K562 (cell line): ENCODE measurements at regions of chr1 and their contacts with region 1.

Region 1: DNA sequence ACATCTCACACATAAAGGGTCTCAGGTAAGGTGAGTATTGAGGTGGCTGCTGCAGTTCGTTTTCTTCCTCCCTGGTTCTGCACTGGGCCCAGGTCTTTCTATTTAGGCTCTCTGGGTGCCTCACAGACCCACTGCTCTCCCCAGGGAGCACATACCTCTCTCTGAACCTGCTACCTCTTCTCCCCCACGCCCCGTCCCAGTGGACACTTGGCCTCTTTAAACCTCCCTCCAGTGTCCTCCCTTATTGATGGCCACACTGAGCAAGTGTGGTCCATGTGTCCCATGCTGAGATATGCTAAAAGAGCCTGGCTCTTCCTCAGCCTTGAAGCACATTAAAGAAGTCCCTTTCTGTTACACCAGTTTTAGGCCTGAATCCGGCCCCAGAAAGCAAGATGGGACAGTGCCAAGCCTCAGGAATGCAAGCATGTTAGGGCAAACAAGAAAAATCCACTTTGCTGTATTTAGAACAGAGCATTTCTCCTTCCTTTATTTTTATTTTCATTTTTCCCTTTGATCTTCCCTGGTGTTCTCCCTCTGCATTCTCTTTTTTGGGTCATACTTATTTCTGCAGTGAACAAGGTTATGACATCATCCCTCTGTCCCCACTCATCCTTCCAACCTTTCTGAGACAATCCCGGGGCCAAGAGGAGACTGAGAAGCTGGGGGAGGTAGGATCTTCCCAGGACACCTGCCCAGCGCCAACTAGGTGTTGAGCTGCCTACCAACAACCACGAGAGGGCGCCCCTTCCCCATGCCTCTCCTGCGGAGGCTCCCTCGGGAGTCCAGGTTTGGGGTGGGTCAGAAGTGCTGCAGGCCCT is 5.0 kb upstream of the CHI3L2 start:
- DNase-seq: peak; percentile 86 to 92 (median 91)
- ATAC-seq: peak; percentile 99
- H3K4me3 ChIP-seq: no peak overlapping the region
- H3K27ac ChIP-seq: no peak overlapping the region
- H3K4me1 ChIP-seq: no peaks in the 10 kb centered on the region; a peak in 2 of 5 replicates
- H3K27me3 ChIP-seq: peaks cover 4 to 15% of the 10 kb centered on the region in 2 experiments; a peak in 2 of 5 replicates
- CTCF ChIP-seq: peak; percentile 95 to 97 (median 95)
- EP300 ChIP-seq: no peak
- POLR2A ChIP-seq: no peak
- RAD21 ChIP-seq: peak; percentile 94 to 98

Region 2: GRCh38 chr1:111030590-111030989 is 191.9 kb before region 1 on chr1:
- CTCF ChIA-PET with region 1: no interaction called
- POLR2A ChIA-PET with region 1: no interaction called
- in situ Hi-C with region 1: no loop called
- intact Hi-C with region 1: loop called (anchors 2 kb)
- DNase-seq: peak; percentile 44 to 83 (median 53)
- ATAC-seq: peak; percentile 95
- H3K4me3 ChIP-seq: no peak overlapping the region
- H3K27ac ChIP-seq: no peak overlapping the region
- H3K4me1 ChIP-seq: peaks cover 0 to under 1% of the 10 kb centered on the region in 2 experiments; a peak in 1 of 5 replicates
- H3K27me3 ChIP-seq: no peaks in the 10 kb centered on the region
- CTCF ChIP-seq: peak; percentile 86 to 93 (median 87)
- EP300 ChIP-seq: no peak
- POLR2A ChIP-seq: no peak
- RAD21 ChIP-seq: peak; percentile 59 to 89

Region 3: DNA sequence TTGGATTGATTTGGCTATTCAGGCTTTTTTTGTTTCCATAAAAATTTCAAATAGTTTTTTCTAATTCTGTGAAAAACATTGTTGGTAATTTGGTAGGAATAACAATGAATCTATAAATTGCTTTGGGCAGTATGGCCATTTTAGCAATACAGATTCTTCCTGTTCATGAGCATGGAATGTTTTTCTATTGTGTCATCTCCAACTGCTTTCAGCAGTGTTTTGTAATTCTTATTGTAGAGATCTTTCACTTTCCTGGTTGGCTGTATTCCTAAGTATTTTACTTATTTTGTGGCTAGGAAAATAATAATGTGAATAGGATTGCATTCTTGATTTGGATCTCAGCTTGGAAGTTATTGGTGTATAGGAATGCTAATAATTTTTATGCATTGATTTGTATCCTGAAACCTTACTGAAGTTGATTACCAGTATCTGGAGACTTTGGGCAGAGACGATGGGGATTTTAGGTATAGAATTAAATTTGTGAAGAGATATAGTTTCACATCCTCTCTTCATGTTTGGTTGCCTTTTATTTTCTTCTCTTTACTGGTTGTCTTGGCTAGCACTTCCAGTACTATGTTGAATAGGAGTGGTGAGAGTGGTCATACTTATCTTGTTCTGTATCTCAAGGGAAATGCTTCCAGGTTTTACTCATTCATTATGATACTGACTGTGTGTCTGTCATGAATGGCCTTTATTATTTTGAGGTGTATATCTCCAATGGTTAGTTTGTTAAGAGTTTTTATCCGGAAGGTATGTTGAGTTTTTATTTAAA is 139.9 kb before region 1 on chr1:
- CTCF ChIA-PET with region 1: no interaction called
- POLR2A ChIA-PET with region 1: no interaction called
- in situ Hi-C with region 1: no loop called
- intact Hi-C with region 1: no loop called
- DNase-seq: no peak
- ATAC-seq: no peak
- H3K4me3 ChIP-seq: no peak overlapping the region
- H3K27ac ChIP-seq: no peak overlapping the region
- H3K4me1 ChIP-seq: no peaks in the 10 kb centered on the region
- H3K27me3 ChIP-seq: no peaks in the 10 kb centered on the region
- CTCF ChIP-seq: no peak
- EP300 ChIP-seq: no peak
- POLR2A ChIP-seq: no peak
- RAD21 ChIP-seq: no peak

Region 4: GRCh38 chr1:111270781-111271463 is 48.4 kb after region 1 on chr1:
- CTCF ChIA-PET with region 1: no interaction called
- POLR2A ChIA-PET with region 1: no interaction called
- in situ Hi-C with region 1: no loop called
- intact Hi-C with region 1: no loop called
- DNase-seq: no peak
- ATAC-seq: peak; percentile 49; the same call in 2 of the 3 replicates
- H3K4me3 ChIP-seq: no peak overlapping the region
- H3K27ac ChIP-seq: no peak overlapping the region
- H3K4me1 ChIP-seq: peaks cover 0 to 9% of the 10 kb centered on the region in 2 experiments; a peak in 2 of 5 replicates
- H3K27me3 ChIP-seq: peaks cover 17 to 21% of the 10 kb centered on the region in 2 experiments
- CTCF ChIP-seq: no peak
- EP300 ChIP-seq: no peak
- POLR2A ChIP-seq: no peak
- RAD21 ChIP-seq: no peak

Region 5: DNA sequence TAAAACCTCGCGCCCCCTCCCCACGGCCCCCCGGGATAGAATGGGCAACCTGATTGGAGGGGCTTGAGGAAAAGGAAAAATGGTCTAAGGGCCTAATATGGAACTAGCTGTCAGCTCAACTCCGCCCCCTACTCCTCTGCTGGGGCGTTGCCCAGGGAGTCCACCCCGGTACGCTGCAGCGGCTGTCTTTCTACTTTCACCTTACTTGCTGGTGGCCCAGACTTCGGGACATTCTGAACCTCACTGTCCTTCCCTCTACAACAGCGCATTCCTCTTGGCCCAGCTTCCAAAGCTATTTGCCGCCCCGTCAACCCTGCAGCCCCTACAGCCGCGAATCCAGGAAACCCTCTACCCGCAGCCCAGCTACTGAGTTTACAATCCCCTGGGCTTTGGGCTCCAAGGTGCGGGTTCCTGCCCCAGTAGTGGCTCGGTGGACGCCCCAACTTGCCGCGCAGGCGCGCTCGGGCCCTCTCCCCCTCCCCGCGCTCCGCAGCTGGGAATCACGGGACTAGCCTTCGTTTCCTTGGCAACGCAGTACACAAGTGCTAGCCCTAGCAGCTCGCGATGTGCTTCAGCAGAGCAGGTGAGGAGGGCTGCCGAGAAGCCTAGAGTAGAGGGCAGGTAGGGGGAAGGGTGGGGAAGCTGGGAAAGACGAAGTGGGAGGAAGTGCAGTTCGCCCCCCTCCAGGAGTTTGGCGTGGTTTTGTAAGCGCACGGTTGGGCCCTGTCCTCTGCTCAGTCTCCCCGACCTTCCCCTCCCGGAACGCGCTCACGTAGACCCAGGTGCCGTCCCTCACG is 123.8 kb after region 1 on chr1:
- CTCF ChIA-PET with region 1: no interaction called
- POLR2A ChIA-PET with region 1: no interaction called
- in situ Hi-C with region 1: no loop called
- intact Hi-C with region 1: loop called (anchors 5 kb)
- DNase-seq: peak; percentile 86 to 94 (median 87)
- ATAC-seq: peak; percentile 99
- H3K4me3 ChIP-seq: peak overlapping the region; percentile 42
- H3K27ac ChIP-seq: no peak overlapping the region
- H3K4me1 ChIP-seq: peaks cover 0 to 7% of the 10 kb centered on the region in 2 experiments; a peak in 3 of 5 replicates
- H3K27me3 ChIP-seq: peaks cover 0 to 15% of the 10 kb centered on the region in 2 experiments; a peak in 1 of 5 replicates
- CTCF ChIP-seq: peak; percentile 24 to 43 (median 42); a peak in 4 of 6 replicates
- EP300 ChIP-seq: no peak
- POLR2A ChIP-seq: no peak
- RAD21 ChIP-seq: 0 out of 4 replicates have a peak, but pooled peaks of 1 of the 2 experiments have one; percentile 16

Region 6: DNA sequence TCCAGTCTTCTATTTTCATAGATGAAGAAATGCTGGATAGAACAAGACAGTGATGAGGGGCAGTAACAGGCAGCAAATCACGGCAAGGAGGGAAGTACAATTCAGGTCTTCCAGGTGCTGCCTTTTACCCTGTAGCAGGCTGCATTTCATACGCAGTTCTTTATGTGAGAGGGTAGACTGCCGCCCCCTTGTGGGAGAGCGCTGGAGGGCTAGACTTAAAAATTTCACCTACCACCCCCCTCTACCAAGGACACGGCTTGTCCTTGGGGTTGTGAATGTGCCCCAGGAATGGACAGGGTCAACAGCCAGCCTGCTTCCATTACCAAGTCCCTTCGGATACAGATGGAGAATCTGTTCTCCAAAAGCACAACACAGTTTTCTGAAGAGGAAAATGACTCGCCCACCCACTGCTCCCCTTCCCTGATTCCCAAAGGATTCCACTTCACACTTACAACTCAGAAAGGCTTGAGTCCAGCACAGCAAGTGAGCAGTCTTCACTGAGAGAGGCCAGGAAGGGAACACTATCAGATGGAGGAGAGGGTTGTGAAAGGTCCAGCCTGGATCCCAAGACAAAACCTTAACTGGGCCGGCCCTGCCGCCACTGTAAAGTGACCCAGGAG is 219.2 kb after region 1 on chr1:
- CTCF ChIA-PET with region 1: interaction called, 3 read pairs
- POLR2A ChIA-PET with region 1: interaction called, 3 read pairs
- in situ Hi-C with region 1: no loop called
- intact Hi-C with region 1: loop called (anchors 5 kb)
- DNase-seq: peak; percentile 47 to 67 (median 52)
- ATAC-seq: peak; percentile 86
- H3K4me3 ChIP-seq: no peak overlapping the region
- H3K27ac ChIP-seq: no peak overlapping the region; the same call in 2 of the 3 replicates
- H3K4me1 ChIP-seq: peaks cover 0 to 8% of the 10 kb centered on the region in 2 experiments; a peak in 3 of 5 replicates
- H3K27me3 ChIP-seq: no peaks in the 10 kb centered on the region
- CTCF ChIP-seq: peak; percentile 61 to 78 (median 70)
- EP300 ChIP-seq: no peak
- POLR2A ChIP-seq: no peak
- RAD21 ChIP-seq: peak; percentile 37 to 58; a peak in 3 of 4 replicates

Region 7: GRCh38 chr1:111769517-111770146 is 547.1 kb after region 1 on chr1:
- CTCF ChIA-PET with region 1: interaction called, 3 read pairs
- POLR2A ChIA-PET with region 1: no interaction called
- in situ Hi-C with region 1: loop called (anchors 5 kb)
- intact Hi-C with region 1: no loop called
- DNase-seq: peak; percentile 65 to 80 (median 68)
- ATAC-seq: peak; percentile 76
- H3K4me3 ChIP-seq: no peak overlapping the region
- H3K27ac ChIP-seq: no peak overlapping the region
- H3K4me1 ChIP-seq: no peaks in the 10 kb centered on the region
- H3K27me3 ChIP-seq: peaks cover 2 to 6% of the 10 kb centered on the region in 2 experiments; a peak in 3 of 5 replicates
- CTCF ChIP-seq: peak; percentile 68 to 96 (median 82)
- EP300 ChIP-seq: no peak
- POLR2A ChIP-seq: no peak; the same call in 1 of the 2 replicates
- RAD21 ChIP-seq: peak; percentile 94 to 95